IMR-90 (cell line): ENCODE measurements at regions of chr1 and their contacts with region 1.

Region 1: GRCh38 chr1:26799479-26800142 is 11.9 kb downstream of the PIGV start:
- DNase-seq: peak; percentile 81
- ATAC-seq: peak; percentile 85
- H3K4me3 ChIP-seq: no peak overlapping the region
- H3K27ac ChIP-seq: peak overlapping the region; percentile 53
- H3K4me1 ChIP-seq: peaks cover 12% of the 10 kb centered on the region
- H3K27me3 ChIP-seq: no peaks in the 10 kb centered on the region
- CTCF ChIP-seq: no peak
- POLR2A ChIP-seq: no peak
- RAD21 ChIP-seq: no peak

Region 2: GRCh38 chr1:26608895-26609294 is 190.7 kb before region 1 on chr1:
- CTCF ChIA-PET with region 1: interaction called, 3 read pairs
- POLR2A ChIA-PET with region 1: no interaction called
- dilution Hi-C with region 1: no loop called
- in situ Hi-C with region 1: loop called (anchors 5 kb)
- intact Hi-C with region 1: no loop called
- DNase-seq: no peak
- ATAC-seq: no peak
- H3K4me3 ChIP-seq: no peak overlapping the region
- H3K27ac ChIP-seq: no peak overlapping the region
- H3K4me1 ChIP-seq: no peaks in the 10 kb centered on the region
- H3K27me3 ChIP-seq: peaks cover 20% of the 10 kb centered on the region
- CTCF ChIP-seq: no peak
- POLR2A ChIP-seq: no peak
- RAD21 ChIP-seq: no peak